Psoas muscle (tissue), 8 donors: ENCODE measurements at regions of chr2 and their contacts with region 1.

Region 1: GRCh38 chr2:216775043-216775453 is 79.7 kb upstream of the IGFBP5 start:
- DNase-seq: peak; percentile 86 to 93
- ATAC-seq: peak; percentile 88 to 92 (median 89)
- H3K4me3 ChIP-seq: peak overlapping the region; percentile 37
- H3K27ac ChIP-seq: peak overlapping the region; percentile 94
- H3K4me1 ChIP-seq: peaks cover 37% of the 10 kb centered on the region
- H3K27me3 ChIP-seq: no peaks in the 10 kb centered on the region
- CTCF ChIP-seq: no peak

Region 2: GRCh38 chr2:216799873-216800431 is 24.9 kb after region 1 on chr2:
- intact Hi-C with region 1: loop called in 1 of 2 experiments (anchors 1 kb)
- DNase-seq: peak; percentile 69 to 85
- ATAC-seq: peak; percentile 76 to 80 (median 78)
- H3K4me3 ChIP-seq: no peak overlapping the region
- H3K27ac ChIP-seq: peak overlapping the region; percentile 97
- H3K4me1 ChIP-seq: peaks cover 58% of the 10 kb centered on the region
- H3K27me3 ChIP-seq: no peaks in the 10 kb centered on the region
- CTCF ChIP-seq: no peak

Region 3: GRCh38 chr2:216862628-216863398 is 87.8 kb after region 1 on chr2:
- intact Hi-C with region 1: no loop called
- DNase-seq: no peak
- ATAC-seq: no peak
- H3K4me3 ChIP-seq: no peak overlapping the region
- H3K27ac ChIP-seq: no peak overlapping the region
- H3K4me1 ChIP-seq: no peaks in the 10 kb centered on the region
- H3K27me3 ChIP-seq: no peaks in the 10 kb centered on the region
- CTCF ChIP-seq: no peak

Region 4: GRCh38 chr2:217058791-217059764 is 284.0 kb after region 1 on chr2:
- intact Hi-C with region 1: loop called in 1 of 2 experiments (anchors 1 kb)
- DNase-seq: no peak
- ATAC-seq: peak in 2 of 4 donors; percentile 48 to 52
- H3K4me3 ChIP-seq: no peak overlapping the region
- H3K27ac ChIP-seq: no peak overlapping the region
- H3K4me1 ChIP-seq: peaks cover 3% of the 10 kb centered on the region
- H3K27me3 ChIP-seq: no peaks in the 10 kb centered on the region
- CTCF ChIP-seq: no peak

Region 5: DNA sequence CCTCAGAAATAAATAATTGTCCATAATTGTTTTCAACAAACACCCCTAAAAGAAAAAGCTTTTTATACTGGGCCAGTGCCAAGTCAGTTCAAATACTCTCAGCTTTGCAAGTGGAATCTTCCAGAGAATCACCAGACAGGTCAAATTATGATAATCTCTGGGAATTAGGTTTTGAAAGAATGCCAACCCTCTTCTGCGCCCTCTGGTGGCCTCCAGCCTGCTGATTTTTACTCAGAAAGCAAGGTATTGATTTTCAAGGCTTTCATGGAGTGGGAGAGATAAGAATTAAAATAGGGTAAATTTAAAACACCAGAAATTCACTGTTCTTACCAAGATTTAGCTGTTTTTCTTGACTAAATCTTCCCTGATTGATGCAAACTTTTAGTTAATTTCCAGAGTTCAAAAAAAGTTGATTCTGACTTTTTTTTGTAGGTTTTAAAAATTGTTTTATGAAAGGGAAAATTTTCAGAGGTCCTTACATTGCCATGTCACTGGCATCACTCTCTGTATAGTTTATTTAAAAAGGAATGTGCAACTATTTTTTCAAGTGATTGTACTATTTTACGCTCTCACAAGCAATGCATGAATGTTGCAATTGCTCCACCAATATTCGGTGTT is 367.7 kb after region 1 on chr2:
- intact Hi-C with region 1: no loop called
- DNase-seq: no peak
- ATAC-seq: no peak
- H3K4me3 ChIP-seq: no peak overlapping the region
- H3K27ac ChIP-seq: no peak overlapping the region
- H3K4me1 ChIP-seq: no peaks in the 10 kb centered on the region
- H3K27me3 ChIP-seq: no peaks in the 10 kb centered on the region
- CTCF ChIP-seq: peak; percentile 31

Region 6: DNA sequence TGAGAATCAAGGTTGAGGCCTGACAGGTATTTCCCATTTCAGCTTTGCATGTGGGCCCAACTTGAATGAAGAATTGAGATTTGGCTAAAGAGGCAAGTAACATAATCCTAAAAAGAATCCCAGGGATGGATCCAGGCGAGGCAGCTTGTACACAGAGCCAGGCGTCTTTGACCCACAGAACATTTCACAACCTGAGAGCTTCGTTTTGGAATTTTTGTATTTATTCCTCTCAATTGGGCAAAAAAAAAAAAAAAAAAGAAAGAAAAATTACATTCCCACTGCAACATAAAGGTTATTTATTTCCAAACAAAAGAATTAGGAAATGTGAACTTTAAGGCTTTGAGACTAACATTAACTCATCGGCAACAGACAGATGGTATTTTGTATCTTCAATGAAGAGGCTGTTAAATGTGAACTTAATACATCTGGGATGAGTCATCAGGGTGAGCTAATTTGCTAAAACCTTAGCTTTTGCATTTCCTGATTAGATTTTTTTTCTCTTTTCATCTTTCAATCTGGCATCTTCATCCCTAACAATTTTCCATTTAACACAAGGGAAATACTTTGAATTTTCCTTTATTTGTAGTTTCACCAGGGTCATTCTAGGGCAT is 563.4 kb after region 1 on chr2:
- intact Hi-C with region 1: no loop called
- DNase-seq: no peak
- ATAC-seq: peak in 2 of 4 donors; percentile 53 to 73
- H3K4me3 ChIP-seq: no peak overlapping the region
- H3K27ac ChIP-seq: no peak overlapping the region
- H3K4me1 ChIP-seq: peaks cover 6% of the 10 kb centered on the region
- H3K27me3 ChIP-seq: no peaks in the 10 kb centered on the region
- CTCF ChIP-seq: no peak